ENCODE measurements at regions of chr1 and their contacts with region 1.

Region 1: DNA sequence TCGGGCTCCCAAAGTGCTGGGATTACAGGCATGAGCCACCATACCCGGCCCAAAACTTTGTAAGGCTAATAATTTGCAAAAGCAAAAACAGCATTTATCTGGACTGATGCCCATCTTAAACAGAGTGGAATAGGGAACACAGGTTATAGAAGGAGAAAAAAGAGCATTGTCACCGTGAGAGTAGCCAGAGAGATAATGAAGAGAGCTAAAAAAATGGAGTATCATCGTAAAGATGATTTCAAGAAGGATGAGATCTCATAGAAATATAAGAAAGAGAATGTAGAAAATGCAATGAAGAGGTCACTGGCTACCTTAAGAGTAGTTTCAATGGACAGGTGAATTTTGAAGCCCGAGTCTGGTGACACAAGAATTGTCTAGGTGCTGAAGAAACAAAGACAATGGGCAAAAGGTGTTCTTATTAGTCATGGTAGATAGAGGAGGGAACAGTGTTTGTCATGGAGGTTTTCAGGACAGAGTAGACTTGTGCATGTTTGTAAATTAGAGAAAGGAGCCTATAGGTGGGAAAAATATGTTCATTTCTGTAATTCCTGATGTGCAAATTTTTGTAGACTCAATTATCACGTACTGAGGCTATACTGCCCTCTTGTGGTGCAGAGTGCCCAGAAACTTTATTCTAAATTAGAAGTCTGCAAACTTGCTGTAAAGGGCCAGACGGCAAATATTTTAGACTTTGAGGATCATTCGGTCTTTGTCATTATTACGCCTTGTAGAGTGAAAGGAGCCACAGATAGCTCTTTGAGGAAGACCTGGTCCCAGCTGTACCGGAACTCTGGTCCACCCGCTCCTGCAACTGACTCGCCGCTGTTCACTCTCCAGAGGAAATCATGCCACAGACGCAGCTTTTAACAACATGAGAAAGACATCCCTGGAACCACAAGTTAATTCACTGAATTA is 8.1 kb upstream of the TMEM183A start:
- DNase-seq: peak; percentile 18 to 74 (median 63)
- ATAC-seq: peak; percentile 89
- H3K4me3 ChIP-seq: no peak overlapping the region
- H3K4me3 Mint-ChIP-seq: peak overlapping the region in 7 of 10 donors; percentile 44 to 75 (median 56)
- H3K27ac ChIP-seq: no peak overlapping the region
- H3K27ac Mint-ChIP-seq: peak overlapping the region in 4 of 9 donors; percentile 23 to 70 (median 52)
- H3K4me1 ChIP-seq: no peaks in the 10 kb centered on the region
- H3K4me1 Mint-ChIP-seq: peaks cover 3 to 10% (median 6%) of the 10 kb centered on the region in 7 donors
- H3K27me3 ChIP-seq: no peaks in the 10 kb centered on the region
- H3K27me3 Mint-ChIP-seq: peaks cover 24 to 40% (median 28%) of the 10 kb centered on the region in 5 donors

Region 2: GRCh38 chr1:202462342-202463076 is 536.6 kb before region 1 on chr1:
- CTCF ChIA-PET with region 1: no interaction called
- POLR2A ChIA-PET with region 1: no interaction called
- intact Hi-C with region 1: loop called in 1 of 2 experiments (anchors 5 kb)
- DNase-seq: no peak
- ATAC-seq: no peak
- H3K4me3 ChIP-seq: no peak overlapping the region
- H3K4me3 Mint-ChIP-seq: no peak overlapping the region
- H3K27ac ChIP-seq: no peak overlapping the region
- H3K27ac Mint-ChIP-seq: peak overlapping the region in 1 of 9 donors; percentile 53
- H3K4me1 ChIP-seq: no peaks in the 10 kb centered on the region
- H3K4me1 Mint-ChIP-seq: peaks cover 0 to 4% (median 0%) of the 10 kb centered on the region in 7 donors
- H3K27me3 ChIP-seq: no peaks in the 10 kb centered on the region
- H3K27me3 Mint-ChIP-seq: no peaks in the 10 kb centered on the region

Region 3: GRCh38 chr1:202716654-202717053 is 282.4 kb before region 1 on chr1:
- CTCF ChIA-PET with region 1: no interaction called
- POLR2A ChIA-PET with region 1: no interaction called
- intact Hi-C with region 1: no loop called
- DNase-seq: no peak
- ATAC-seq: no peak
- H3K4me3 ChIP-seq: no peak overlapping the region
- H3K4me3 Mint-ChIP-seq: no peak overlapping the region
- H3K27ac ChIP-seq: no peak overlapping the region
- H3K27ac Mint-ChIP-seq: no peak overlapping the region
- H3K4me1 ChIP-seq: peaks cover 0 to 4% of the 10 kb centered on the region in 2 donors
- H3K4me1 Mint-ChIP-seq: peaks cover 0 to 6% (median 5%) of the 10 kb centered on the region in 7 donors
- H3K27me3 ChIP-seq: no peaks in the 10 kb centered on the region
- H3K27me3 Mint-ChIP-seq: peaks cover 13 to 59% (median 21%) of the 10 kb centered on the region in 5 donors

Region 4: GRCh38 chr1:202745323-202745888 is 253.7 kb before region 1 on chr1:
- CTCF ChIA-PET with region 1: interaction called, 8 read pairs
- POLR2A ChIA-PET with region 1: no interaction called
- intact Hi-C with region 1: loop called (anchors 1 to 5 kb)
- DNase-seq: no peak
- ATAC-seq: no peak
- H3K4me3 ChIP-seq: no peak overlapping the region
- H3K4me3 Mint-ChIP-seq: no peak overlapping the region
- H3K27ac ChIP-seq: no peak overlapping the region
- H3K27ac Mint-ChIP-seq: peak overlapping the region in 1 of 9 donors; percentile 24
- H3K4me1 ChIP-seq: no peaks in the 10 kb centered on the region
- H3K4me1 Mint-ChIP-seq: no peaks in the 10 kb centered on the region
- H3K27me3 ChIP-seq: no peaks in the 10 kb centered on the region
- H3K27me3 Mint-ChIP-seq: no peaks in the 10 kb centered on the region

Region 5: DNA sequence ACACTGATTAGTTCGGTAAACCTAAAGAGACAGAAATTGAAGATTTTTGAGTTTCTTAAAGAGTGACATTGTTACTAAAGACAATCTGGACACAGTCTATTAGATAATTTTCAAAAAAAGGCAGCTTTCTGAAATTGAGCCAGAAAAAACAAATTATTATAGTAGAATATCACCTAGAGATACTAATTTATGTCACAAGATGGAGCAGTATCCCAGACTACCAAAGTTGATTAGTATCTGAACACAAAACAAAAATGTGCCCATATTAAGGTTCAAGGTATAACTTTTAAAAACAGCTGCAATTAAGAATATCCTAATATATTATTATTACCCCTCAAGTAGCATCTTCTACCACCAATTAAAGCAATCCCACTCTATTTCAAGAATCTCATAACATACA is 248.3 kb before region 1 on chr1:
- CTCF ChIA-PET with region 1: interaction called, 8 read pairs
- POLR2A ChIA-PET with region 1: no interaction called
- intact Hi-C with region 1: loop called (anchors 1 to 5 kb)
- DNase-seq: peak in 2 of 9 donors; percentile 4 to 19
- ATAC-seq: no peak
- H3K4me3 ChIP-seq: no peak overlapping the region
- H3K4me3 Mint-ChIP-seq: no peak overlapping the region
- H3K27ac ChIP-seq: no peak overlapping the region
- H3K27ac Mint-ChIP-seq: peak overlapping the region in 1 of 9 donors; percentile 45
- H3K4me1 ChIP-seq: no peaks in the 10 kb centered on the region
- H3K4me1 Mint-ChIP-seq: peaks cover 0 to 5% (median 0%) of the 10 kb centered on the region in 7 donors
- H3K27me3 ChIP-seq: no peaks in the 10 kb centered on the region
- H3K27me3 Mint-ChIP-seq: no peaks in the 10 kb centered on the region

Region 6: DNA sequence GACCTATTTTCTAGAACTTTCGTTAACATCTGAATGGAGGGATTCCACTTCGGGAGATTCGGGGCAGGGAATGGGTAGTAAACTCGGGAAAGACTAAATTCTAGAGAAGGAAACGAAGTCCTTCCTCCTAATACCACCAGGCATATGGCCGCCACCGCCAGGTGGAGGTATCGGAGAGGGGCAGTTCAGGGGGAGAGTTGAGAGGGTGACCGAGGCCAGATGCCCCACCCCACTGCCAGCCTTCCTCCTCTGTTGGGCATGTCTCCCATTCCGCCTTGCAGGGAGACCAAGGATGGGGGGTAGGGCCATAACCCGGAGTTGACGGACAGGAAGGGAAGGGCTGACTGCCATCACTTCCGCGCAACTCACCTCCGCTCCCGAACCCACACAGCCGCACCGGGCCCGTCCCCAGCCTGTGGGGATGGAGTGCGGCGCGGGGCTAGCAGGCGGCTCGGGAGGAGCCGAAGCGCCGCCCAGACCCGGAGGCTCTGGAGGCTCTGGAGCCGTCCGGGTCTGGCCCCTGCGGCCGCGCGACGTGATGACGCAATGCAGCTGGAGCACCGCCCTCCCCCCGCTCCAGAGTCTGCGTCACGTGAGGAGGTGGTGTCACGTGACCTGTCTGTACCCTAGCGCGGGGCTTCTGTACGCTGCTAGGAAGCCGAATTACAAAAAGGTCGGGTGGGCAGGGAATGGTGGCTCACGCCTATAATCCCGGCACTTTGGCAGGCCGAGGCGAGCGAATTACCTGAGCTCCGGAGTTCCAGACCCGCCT is 72.2 kb before region 1 on chr1 and contains the start of gene KLHL12:
- CTCF ChIA-PET with region 1: interaction called, 6 read pairs
- POLR2A ChIA-PET with region 1: interaction called, 6 read pairs
- intact Hi-C with region 1: loop called (anchors 1 to 2 kb)
- DNase-seq: peak; percentile 88 to 95 (median 94)
- ATAC-seq: peak; percentile 97
- H3K4me3 ChIP-seq: peak within 1 kb of the TSS; percentile 97
- H3K4me3 Mint-ChIP-seq: peak within 1 kb of the TSS; percentile 90 to 96 (median 94)
- H3K27ac ChIP-seq: peak within 1 kb of the TSS; percentile 97
- H3K27ac Mint-ChIP-seq: peak within 1 kb of the TSS; percentile 92 to 97 (median 94)
- H3K4me1 ChIP-seq: peaks cover 19 to 26% of the 10 kb centered on the region in 2 donors
- H3K4me1 Mint-ChIP-seq: peaks cover 17 to 40% (median 34%) of the 10 kb centered on the region in 7 donors
- H3K27me3 ChIP-seq: no peaks in the 10 kb centered on the region
- H3K27me3 Mint-ChIP-seq: peaks cover 0 to 11% (median 0%) of the 10 kb centered on the region in 5 donors
- total RNA-seq, gene KLHL12: 15.6 to 28.0 (median 24.5) TPM

Region 7: GRCh38 chr1:203026031-203026989 is 27.2 kb after region 1 on chr1 and contains the start of gene PPFIA4:
- CTCF ChIA-PET with region 1: no interaction called
- POLR2A ChIA-PET with region 1: no interaction called
- intact Hi-C with region 1: no loop called
- DNase-seq: peak; percentile 72 to 94 (median 89)
- ATAC-seq: peak; percentile 98
- H3K4me3 ChIP-seq: peak within 1 kb of the TSS; percentile 84
- H3K4me3 Mint-ChIP-seq: peak within 1 kb of the TSS; percentile 74 to 95 (median 84)
- H3K27ac ChIP-seq: peak within 1 kb of the TSS; percentile 53
- H3K27ac Mint-ChIP-seq: peak within 1 kb of the TSS; percentile 73 to 96 (median 85)
- H3K4me1 ChIP-seq: peaks cover 0 to 11% of the 10 kb centered on the region in 2 donors
- H3K4me1 Mint-ChIP-seq: peaks cover 0 to 24% (median 14%) of the 10 kb centered on the region in 7 donors
- H3K27me3 ChIP-seq: no peaks in the 10 kb centered on the region
- H3K27me3 Mint-ChIP-seq: peaks cover 0 to 9% (median 0%) of the 10 kb centered on the region in 5 donors
- total RNA-seq, gene PPFIA4: 0.40 to 45.5 (median 2.4) TPM